CD4-positive, alpha-beta T cell (primary cell): ENCODE measurements at regions of chrX and their contacts with region 1.

Region 1: GRCh38 chrX:134969726-134970125 is 21.1 kb upstream of the SMIM10 start:
- DNase-seq: no peak
- ATAC-seq: no peak
- H3K4me3 ChIP-seq: no peak overlapping the region
- H3K4me3 Mint-ChIP-seq: no peak overlapping the region
- H3K27ac ChIP-seq: no peak overlapping the region
- H3K27ac Mint-ChIP-seq: no peak overlapping the region
- H3K4me1 ChIP-seq: peaks cover 2% of the 10 kb centered on the region
- H3K4me1 Mint-ChIP-seq: no peaks in the 10 kb centered on the region
- H3K27me3 ChIP-seq: no peaks in the 10 kb centered on the region
- H3K27me3 Mint-ChIP-seq: peaks cover 4% of the 10 kb centered on the region
- CTCF ChIP-seq: no peak

Region 2: DNA sequence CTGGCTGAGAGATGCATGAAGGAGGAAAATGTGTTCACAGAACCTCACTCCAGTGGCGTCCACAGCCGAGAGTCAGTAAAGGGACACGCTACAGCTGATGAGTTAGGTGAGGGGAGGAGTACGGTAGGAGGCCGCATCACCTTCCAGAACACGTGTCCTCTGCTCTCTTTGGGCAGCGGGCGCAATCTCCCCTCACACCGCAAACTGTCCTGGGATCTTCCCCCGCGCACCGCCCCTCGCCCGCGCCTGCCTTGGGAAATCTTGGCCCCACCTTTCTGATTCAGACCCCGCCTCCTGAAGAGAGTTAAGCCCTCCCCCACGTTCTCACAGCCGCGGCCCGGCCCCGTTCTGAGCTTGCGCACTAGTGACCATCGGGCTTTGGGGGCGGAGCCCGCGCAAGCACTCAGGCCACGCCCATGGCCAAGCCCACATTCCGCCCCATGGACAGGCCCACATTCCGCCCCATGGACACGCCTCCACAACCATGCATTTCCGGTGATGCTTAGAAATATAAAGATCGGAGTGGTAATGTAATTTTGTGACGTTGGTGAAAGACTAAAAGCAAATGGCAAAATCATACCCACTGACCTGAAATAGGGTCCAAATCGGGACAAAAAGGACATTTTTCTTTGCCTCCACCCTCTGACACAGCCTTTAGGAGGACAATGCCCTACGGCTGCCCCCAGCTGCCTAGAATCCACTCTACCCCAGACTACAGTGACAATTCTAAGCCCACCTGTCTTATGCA is 34.3 kb after region 1 on chrX:
- CTCF ChIA-PET with region 1: no interaction called
- POLR2A ChIA-PET with region 1: no interaction called
- intact Hi-C with region 1: loop called in 1 of 2 experiments (anchors 5 kb)
- DNase-seq: peak; percentile 76 to 93 (median 84)
- ATAC-seq: peak; percentile 96
- H3K4me3 ChIP-seq: peak overlapping the region; percentile 59
- H3K4me3 Mint-ChIP-seq: peak overlapping the region; percentile 83
- H3K27ac ChIP-seq: peak overlapping the region in 1 of 2 donors; percentile 60
- H3K27ac Mint-ChIP-seq: peak overlapping the region; percentile 75
- H3K4me1 ChIP-seq: peaks cover 10% of the 10 kb centered on the region
- H3K4me1 Mint-ChIP-seq: peaks cover 19% of the 10 kb centered on the region
- H3K27me3 ChIP-seq: no peaks in the 10 kb centered on the region
- H3K27me3 Mint-ChIP-seq: no peaks in the 10 kb centered on the region
- CTCF ChIP-seq: no peak

Region 3: DNA sequence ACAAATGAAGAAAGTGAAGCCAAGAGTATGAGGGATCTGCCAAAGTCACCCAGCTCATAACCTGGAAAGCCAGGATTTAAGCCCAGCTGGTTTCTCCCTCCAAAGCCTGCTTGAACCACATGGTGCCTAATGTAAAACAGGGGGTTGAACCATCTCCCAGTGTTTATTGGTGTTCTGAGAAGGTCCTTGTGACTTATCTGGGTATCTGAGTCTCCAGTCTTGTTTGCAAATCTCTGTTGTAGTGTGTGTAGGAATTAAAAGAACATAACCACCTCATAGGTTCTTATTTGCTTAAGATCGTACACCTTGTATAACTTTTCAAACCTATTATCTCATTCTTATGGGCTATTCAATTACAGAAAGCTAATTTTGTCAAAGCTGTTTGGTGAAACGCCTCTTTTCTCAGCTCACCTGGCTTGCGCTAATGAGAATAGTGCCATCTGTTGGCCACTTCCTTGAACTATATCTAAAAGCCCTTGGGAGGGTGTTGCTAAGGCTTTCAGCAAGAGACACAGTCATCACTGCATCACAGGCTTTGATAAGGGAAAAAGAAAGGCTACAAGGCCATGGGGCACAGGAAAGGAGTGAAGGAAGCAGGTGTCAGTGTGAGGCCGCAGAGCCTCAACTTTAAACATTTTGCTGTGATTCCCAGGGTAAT is 116.6 kb after region 1 on chrX:
- CTCF ChIA-PET with region 1: interaction called, 6 read pairs
- POLR2A ChIA-PET with region 1: no interaction called
- intact Hi-C with region 1: loop called (anchors 1 kb)
- DNase-seq: peak in 9 of 14 experiments; percentile 9 to 80 (median 27)
- ATAC-seq: peak; percentile 98
- H3K4me3 ChIP-seq: no peak overlapping the region
- H3K4me3 Mint-ChIP-seq: no peak overlapping the region
- H3K27ac ChIP-seq: no peak overlapping the region
- H3K27ac Mint-ChIP-seq: no peak overlapping the region
- H3K4me1 ChIP-seq: peaks cover 2% of the 10 kb centered on the region
- H3K4me1 Mint-ChIP-seq: peaks cover 6% of the 10 kb centered on the region
- H3K27me3 ChIP-seq: no peaks in the 10 kb centered on the region
- H3K27me3 Mint-ChIP-seq: peaks cover 4% of the 10 kb centered on the region
- CTCF ChIP-seq: peak; percentile 57

Region 4: DNA sequence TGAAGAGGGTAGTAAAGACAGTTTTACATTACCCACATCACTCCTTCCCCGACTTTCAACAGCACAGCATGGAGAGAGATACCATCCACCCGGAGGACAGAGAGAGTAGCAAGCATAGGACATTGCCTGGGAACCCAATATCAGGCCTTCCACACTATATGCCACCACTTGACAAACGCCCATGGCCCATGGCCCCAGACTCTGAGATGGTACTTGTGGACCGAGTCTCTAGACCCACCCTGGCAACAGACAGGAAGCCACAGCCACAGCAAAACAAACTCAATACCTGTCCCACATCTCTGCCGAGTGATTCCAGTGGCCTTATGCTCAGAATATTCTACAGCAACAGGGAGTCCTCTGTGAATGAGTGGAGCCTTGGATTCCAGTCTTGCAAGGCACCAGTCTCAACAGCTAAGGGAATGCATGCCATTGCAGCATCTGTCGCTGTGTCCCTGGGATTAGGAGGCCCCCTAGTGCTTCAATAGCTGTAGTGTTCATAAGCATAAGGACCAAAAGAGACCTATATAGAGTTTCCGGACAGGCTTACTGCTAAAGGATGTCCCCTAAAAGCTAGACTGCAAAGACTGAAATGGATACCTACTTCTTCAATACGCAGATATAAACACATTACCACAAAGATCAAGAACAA is 216.2 kb after region 1 on chrX:
- CTCF ChIA-PET with region 1: interaction called, 3 read pairs
- POLR2A ChIA-PET with region 1: no interaction called
- intact Hi-C with region 1: loop called in 1 of 2 experiments (anchors 1 kb)
- DNase-seq: peak in 10 of 14 experiments; percentile 6 to 71 (median 28)
- ATAC-seq: peak; percentile 60
- H3K4me3 ChIP-seq: no peak overlapping the region
- H3K4me3 Mint-ChIP-seq: no peak overlapping the region
- H3K27ac ChIP-seq: no peak overlapping the region
- H3K27ac Mint-ChIP-seq: no peak overlapping the region
- H3K4me1 ChIP-seq: no peaks in the 10 kb centered on the region
- H3K4me1 Mint-ChIP-seq: no peaks in the 10 kb centered on the region
- H3K27me3 ChIP-seq: no peaks in the 10 kb centered on the region
- H3K27me3 Mint-ChIP-seq: peaks cover 42% of the 10 kb centered on the region
- CTCF ChIP-seq: peak; percentile 31

Region 5: DNA sequence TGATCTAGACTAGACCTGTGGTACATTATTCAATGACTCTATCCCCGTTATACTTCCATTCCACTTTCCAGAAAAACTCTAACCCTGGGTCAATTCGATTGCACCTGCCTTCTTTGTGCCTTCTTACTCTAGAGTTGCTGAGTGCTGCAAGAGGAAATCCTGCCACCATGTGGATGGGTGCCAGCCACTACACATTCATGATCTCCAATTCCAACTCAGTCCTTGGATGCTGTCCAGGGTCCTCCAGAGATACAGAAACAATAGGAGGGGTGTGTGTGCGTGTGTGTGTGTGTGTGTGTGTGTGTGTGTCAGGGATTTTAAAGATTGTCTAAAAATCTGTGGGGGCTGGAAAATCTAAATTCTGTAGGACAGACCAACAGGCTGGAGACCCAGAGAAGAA is 507.9 kb after region 1 on chrX:
- CTCF ChIA-PET with region 1: no interaction called
- POLR2A ChIA-PET with region 1: no interaction called
- intact Hi-C with region 1: loop called (anchors 2 to 10 kb)
- DNase-seq: peak; percentile 7 to 71 (median 26)
- ATAC-seq: peak; percentile 58
- H3K4me3 ChIP-seq: no peak overlapping the region
- H3K4me3 Mint-ChIP-seq: no peak overlapping the region
- H3K27ac ChIP-seq: no peak overlapping the region
- H3K27ac Mint-ChIP-seq: no peak overlapping the region
- H3K4me1 ChIP-seq: no peaks in the 10 kb centered on the region
- H3K4me1 Mint-ChIP-seq: peaks cover 4% of the 10 kb centered on the region
- H3K27me3 ChIP-seq: no peaks in the 10 kb centered on the region
- H3K27me3 Mint-ChIP-seq: no peaks in the 10 kb centered on the region
- CTCF ChIP-seq: no peak